Thyroid gland (tissue), 4 donors: ENCODE measurements at regions of chr16 and their contacts with region 1.

Region 1: GRCh38 chr16:18816286-18816685 is 14.9 kb upstream of the ARL6IP1 start:
- DNase-seq: no peak
- H3K4me3 ChIP-seq: no peak overlapping the region
- H3K27ac ChIP-seq: no peak overlapping the region
- H3K4me1 ChIP-seq: no peaks in the 10 kb centered on the region
- H3K27me3 ChIP-seq: no peaks in the 10 kb centered on the region
- CTCF ChIP-seq: no peak
- POLR2A ChIP-seq: no peak

Region 2: DNA sequence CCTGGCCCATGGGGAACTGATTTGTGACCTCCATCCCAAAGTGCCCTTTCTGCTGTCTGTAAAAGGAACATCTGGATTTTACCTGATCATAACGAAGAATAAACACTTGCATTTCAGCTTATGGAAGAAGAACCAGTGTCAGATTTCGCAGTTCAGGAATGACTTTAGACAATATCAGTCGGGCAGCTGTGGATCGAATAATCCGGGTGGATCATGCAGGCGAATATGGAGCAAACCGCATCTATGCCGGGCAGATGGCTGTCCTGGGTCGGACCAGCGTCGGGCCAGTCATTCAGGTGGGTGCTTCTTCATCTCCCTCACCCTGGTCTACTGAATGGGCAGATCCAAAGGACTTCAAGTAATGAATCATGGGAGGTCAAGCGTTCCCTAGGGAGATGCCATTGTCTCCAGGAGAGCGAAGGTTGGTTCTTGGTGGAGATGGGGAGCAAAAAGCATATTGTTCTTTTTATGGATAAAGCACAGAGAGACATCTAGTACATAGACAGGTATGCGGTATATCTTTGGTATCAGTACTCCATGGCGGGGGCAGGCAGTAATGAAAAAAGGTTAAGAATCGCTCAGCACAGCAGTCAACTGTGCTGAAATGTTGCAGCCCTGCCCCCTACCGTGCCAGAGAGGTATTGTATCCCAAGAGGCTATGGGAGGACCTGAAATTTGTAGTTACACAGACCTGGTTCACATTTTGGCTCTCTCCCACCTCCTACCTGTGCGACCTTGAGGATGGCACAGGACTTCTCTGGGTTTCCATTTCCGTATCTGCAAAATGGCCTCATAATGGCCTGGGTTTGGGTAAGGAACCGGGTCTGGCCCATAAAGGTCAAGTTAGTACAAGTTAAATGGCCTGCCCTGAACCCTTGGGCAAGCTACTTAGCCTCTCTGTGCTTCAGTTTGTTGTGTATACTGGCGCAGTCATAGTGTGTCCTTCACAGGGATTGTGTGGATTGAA is 255.8 kb after region 1 on chr16:
- intact Hi-C with region 1: loop called (anchors 10 kb)
- DNase-seq: peak; percentile 46 to 58
- H3K4me3 ChIP-seq: no peak overlapping the region
- H3K27ac ChIP-seq: no peak overlapping the region
- H3K4me1 ChIP-seq: peaks cover 5 to 10% of the 10 kb centered on the region in 2 donors
- H3K27me3 ChIP-seq: no peaks in the 10 kb centered on the region
- CTCF ChIP-seq: peak in 5 of 6 experiments; percentile 36 to 54 (median 50)
- POLR2A ChIP-seq: no peak

Region 3: GRCh38 chr16:19105891-19106624 is 289.8 kb after region 1 on chr16:
- intact Hi-C with region 1: no loop called
- DNase-seq: no peak
- H3K4me3 ChIP-seq: no peak overlapping the region
- H3K27ac ChIP-seq: no peak overlapping the region
- H3K4me1 ChIP-seq: no peaks in the 10 kb centered on the region
- H3K27me3 ChIP-seq: no peaks in the 10 kb centered on the region
- CTCF ChIP-seq: no peak
- POLR2A ChIP-seq: no peak